ENCODE measurements at regions of chr11 and their contacts with region 1.

Region 1: DNA sequence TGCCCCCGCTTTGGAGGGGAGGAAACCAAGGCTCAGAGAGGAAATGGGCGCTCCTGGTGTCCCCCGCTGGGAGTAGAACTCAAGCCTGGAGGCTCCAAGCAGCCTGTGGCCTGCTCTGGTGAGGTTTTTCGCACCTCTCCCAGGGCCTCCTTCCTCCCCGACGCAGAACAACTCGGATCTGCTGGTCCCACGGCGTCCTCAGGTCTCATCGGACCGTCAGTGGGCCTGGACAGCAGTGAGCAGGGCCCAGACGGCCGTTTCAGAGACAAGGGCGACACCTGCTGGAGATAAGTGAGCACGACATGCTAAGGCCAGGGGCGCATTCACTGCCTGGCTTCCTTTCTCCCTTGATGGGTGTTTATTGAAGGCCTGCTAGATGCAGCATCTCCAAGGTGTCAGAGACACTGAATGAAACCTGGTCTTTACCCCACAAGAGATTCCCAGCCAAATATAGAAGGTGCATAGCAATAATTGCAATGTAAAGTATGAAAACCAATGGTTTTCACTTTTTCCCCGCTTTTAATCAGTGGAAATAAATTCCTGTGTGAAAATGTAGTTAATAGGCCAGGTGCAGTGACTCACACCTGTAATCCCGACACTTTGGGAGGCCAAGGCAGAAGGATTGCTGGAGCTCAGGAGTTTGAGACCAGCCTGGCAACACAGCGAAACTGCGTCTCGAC is 26.9 kb upstream of the CD82 start:
- DNase-seq: peak; percentile 39 to 83 (median 64)
- ATAC-seq: peak; percentile 88
- H3K4me3 ChIP-seq: no peak overlapping the region
- H3K4me3 Mint-ChIP-seq: no peak overlapping the region
- H3K27ac ChIP-seq: no peak overlapping the region
- H3K27ac Mint-ChIP-seq: no peak overlapping the region
- H3K4me1 ChIP-seq: peaks cover 5% of the 10 kb centered on the region
- H3K4me1 Mint-ChIP-seq: no peaks in the 10 kb centered on the region
- H3K27me3 ChIP-seq: peaks cover 0 to 2% of the 10 kb centered on the region in 2 experiments
- H3K27me3 Mint-ChIP-seq: no peaks in the 10 kb centered on the region
- CTCF ChIP-seq: peak; percentile 96

Region 2: DNA sequence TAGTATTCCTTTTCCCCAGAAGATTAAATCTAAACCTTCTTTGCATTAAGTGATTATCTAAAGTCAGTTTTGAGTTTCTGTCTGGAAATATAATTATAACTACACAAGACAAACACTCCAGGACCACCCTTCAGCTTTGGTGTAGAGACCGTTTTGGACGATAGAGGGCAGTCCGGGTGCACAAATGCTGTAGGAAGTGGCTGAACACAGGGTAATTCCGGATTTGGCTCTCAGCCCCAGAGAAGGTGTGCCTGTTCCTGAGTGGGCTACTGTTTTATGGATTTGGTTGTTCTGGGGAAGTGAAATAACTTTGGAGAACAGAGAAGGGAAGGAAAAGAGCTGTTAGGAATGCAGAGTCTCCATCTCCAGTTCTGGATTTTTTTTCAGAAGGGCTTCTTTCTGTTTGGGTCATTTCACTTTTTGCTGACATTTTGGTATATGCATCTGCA is 428.3 kb before region 1 on chr11:
- CTCF ChIA-PET with region 1: no interaction called
- POLR2A ChIA-PET with region 1: no interaction called
- intact Hi-C with region 1: loop called in 1 of 2 experiments (anchors 1 kb)
- DNase-seq: peak; percentile 9 to 70 (median 36)
- ATAC-seq: peak; percentile 91
- H3K4me3 ChIP-seq: no peak overlapping the region
- H3K4me3 Mint-ChIP-seq: no peak overlapping the region
- H3K27ac ChIP-seq: no peak overlapping the region
- H3K27ac Mint-ChIP-seq: no peak overlapping the region
- H3K4me1 ChIP-seq: peaks cover 3% of the 10 kb centered on the region
- H3K4me1 Mint-ChIP-seq: peaks cover 9% of the 10 kb centered on the region
- H3K27me3 ChIP-seq: no peaks in the 10 kb centered on the region
- H3K27me3 Mint-ChIP-seq: no peaks in the 10 kb centered on the region
- CTCF ChIP-seq: peak; percentile 71

Region 3: GRCh38 chr11:44286268-44286880 is 252.1 kb before region 1 on chr11:
- CTCF ChIA-PET with region 1: no interaction called
- POLR2A ChIA-PET with region 1: no interaction called
- intact Hi-C with region 1: loop called in 1 of 2 experiments (anchors 1 kb)
- DNase-seq: peak; percentile 27 to 74 (median 41)
- ATAC-seq: peak; percentile 41
- H3K4me3 ChIP-seq: no peak overlapping the region
- H3K4me3 Mint-ChIP-seq: no peak overlapping the region
- H3K27ac ChIP-seq: no peak overlapping the region
- H3K27ac Mint-ChIP-seq: no peak overlapping the region
- H3K4me1 ChIP-seq: no peaks in the 10 kb centered on the region
- H3K4me1 Mint-ChIP-seq: no peaks in the 10 kb centered on the region
- H3K27me3 ChIP-seq: no peaks in the 10 kb centered on the region
- H3K27me3 Mint-ChIP-seq: peaks cover 10% of the 10 kb centered on the region
- CTCF ChIP-seq: peak; percentile 93

Region 4: DNA sequence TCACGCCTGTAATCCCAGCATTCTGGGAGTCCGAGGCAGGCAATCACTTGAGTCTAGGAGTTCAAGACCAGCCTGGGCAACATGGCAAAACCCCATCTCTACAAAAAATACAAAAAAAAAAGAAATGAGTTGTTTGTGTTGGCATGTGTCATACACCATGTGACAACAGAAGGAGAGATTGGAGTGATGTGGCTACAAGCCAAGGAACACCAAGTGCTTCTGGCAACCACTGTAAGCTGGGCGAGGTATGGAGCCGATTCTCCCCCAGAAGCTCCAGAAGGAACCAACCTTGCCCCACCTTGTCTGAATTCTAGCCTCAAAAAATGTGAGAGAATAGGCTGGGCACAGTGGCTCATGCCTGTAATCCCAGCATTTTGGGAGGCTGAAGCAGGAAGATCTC is 1227.3 kb after region 1 on chr11:
- CTCF ChIA-PET with region 1: no interaction called
- POLR2A ChIA-PET with region 1: no interaction called
- intact Hi-C with region 1: loop called in 1 of 2 experiments (anchors 5 kb)
- DNase-seq: no peak
- ATAC-seq: no peak
- H3K4me3 ChIP-seq: no peak overlapping the region
- H3K4me3 Mint-ChIP-seq: no peak overlapping the region
- H3K27ac ChIP-seq: no peak overlapping the region
- H3K27ac Mint-ChIP-seq: no peak overlapping the region
- H3K4me1 ChIP-seq: peaks cover 1% of the 10 kb centered on the region
- H3K4me1 Mint-ChIP-seq: peaks cover under 1% of the 10 kb centered on the region
- H3K27me3 ChIP-seq: peaks cover 0 to 4% of the 10 kb centered on the region in 2 experiments
- H3K27me3 Mint-ChIP-seq: peaks cover 7% of the 10 kb centered on the region
- CTCF ChIP-seq: no peak

Measured in CD4-positive, alpha-beta T cell (primary cell).